ENCODE measurements at regions of chr15 and their contacts with region 1.

Region 1: DNA sequence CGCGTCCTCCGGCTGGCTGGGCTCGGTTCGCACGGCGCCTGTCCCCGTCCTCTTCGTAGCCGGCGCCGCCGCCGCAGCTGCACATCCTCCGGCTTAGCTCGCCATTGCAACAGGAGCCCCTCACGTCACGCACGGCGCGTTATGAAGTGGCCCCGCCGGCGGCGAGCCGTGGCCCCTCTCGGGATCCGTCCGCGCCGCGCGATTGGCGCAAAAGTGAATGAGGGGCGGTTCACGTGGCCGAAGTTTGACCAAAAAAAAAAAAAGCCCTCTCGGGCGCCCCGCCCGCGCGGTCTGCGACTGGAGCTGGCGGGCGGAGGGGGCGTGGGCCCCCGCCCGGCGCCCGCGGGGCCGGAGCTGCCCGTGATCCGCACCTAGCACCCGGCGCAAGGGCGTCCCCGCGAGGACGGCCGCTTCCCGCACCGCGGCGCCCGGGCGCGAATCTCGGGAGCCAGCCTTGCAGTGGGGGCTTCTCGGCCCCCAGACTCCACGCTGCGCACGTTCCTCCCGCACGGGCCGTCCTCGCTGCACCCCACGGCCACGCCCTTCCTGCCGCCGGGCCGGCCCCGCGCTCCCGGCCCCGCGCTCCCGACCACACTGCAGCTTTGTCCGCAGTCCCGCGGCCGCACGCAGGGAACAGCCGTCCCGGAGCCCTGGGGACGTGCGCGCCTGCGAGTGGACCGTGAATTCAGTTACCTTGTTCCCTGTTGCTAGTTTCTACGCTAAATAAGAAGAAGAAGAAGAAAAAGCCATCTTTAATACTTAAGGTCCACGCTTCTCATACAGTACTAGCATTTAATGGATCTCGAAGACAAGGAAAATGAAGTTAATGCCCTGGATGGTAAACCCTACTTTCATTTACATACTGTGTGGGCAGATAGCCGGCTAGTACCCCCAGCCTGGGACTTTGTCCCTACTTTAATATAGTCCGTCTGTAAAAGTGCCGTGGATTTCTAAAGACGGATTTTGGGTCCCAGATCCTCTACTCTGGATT is at the start of gene CHSY1:
- DNase-seq: peak; percentile 93 to 96 (median 94)
- H3K4me3 ChIP-seq: peak within 1 kb of the TSS; percentile 11 to 96 (median 76)
- H3K27ac ChIP-seq: peak within 1 kb of the TSS; percentile 67 to 99 (median 85)
- H3K4me1 ChIP-seq: peaks cover 4 to 45% of the 10 kb centered on the region in 2 donors
- H3K27me3 ChIP-seq: no peaks in the 10 kb centered on the region
- CTCF ChIP-seq: peak in 3 of 6 experiments; percentile 5 to 16 (median 12)
- POLR2A ChIP-seq: peak; percentile 87 to 92
- total RNA-seq, gene CHSY1: 28.8 to 82.5 (median 38.7) TPM

Region 2: GRCh38 chr15:101127506-101128076 is 124.5 kb before region 1 on chr15:
- intact Hi-C with region 1: loop called in 1 of 2 experiments (anchors 10 kb)
- DNase-seq: peak; percentile 70 to 90 (median 85)
- H3K4me3 ChIP-seq: no peak overlapping the region
- H3K27ac ChIP-seq: peak overlapping the region in 3 of 5 donors; percentile 54 to 82 (median 71)
- H3K4me1 ChIP-seq: peaks cover 7 to 16% of the 10 kb centered on the region in 2 donors
- H3K27me3 ChIP-seq: no peaks in the 10 kb centered on the region
- CTCF ChIP-seq: no peak
- POLR2A ChIP-seq: no peak

Region 3: DNA sequence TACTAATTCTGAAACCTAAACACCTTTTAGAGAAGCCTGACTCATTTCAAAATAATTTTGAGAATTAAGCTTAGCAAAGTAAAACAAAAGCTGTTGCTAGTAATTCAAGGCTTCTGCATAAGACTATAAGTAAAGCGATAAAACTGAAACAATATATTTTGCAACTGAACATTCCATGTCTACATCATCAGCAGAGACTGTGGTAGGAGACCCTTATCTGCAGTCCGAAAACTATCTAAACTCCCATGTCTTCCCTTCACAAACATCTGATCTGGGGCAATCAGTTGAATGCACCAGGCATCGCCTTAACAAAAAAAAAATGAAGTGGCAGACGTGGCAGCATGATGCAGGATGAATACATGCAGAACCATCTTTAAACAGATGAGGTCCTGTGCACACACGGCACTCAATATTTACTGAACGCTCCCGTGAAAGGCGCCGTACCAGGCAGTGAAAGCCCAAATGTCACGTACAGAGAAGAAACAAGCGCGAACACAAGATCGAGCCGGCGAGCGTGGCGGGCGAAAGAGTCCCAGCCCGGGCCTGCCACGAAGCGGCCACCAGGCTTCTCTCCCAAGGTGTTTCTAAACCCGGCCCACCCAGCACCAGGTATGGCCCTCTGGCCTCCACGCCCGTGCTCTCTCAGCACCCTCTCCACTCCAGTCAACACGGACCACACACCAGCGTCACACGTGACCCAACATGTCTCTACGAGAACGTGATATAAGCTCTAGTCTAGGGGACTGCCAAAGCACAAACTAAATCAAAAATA is 63.3 kb before region 1 on chr15:
- intact Hi-C with region 1: loop called in 1 of 2 experiments (anchors 10 kb)
- DNase-seq: peak in 1 of 7 donors; percentile 30
- H3K4me3 ChIP-seq: peak overlapping the region in 1 of 4 donors; percentile 28
- H3K27ac ChIP-seq: peak overlapping the region; percentile 9 to 88 (median 60)
- H3K4me1 ChIP-seq: peaks cover 13 to 59% of the 10 kb centered on the region in 2 donors
- H3K27me3 ChIP-seq: no peaks in the 10 kb centered on the region
- CTCF ChIP-seq: no peak
- POLR2A ChIP-seq: no peak